Breast epithelium (tissue), 4 donors: ENCODE measurements at regions of chr14 and their contacts with region 1.

Region 1: GRCh38 chr14:52950898-52951689 is at the start of gene FERMT2:
- DNase-seq: peak; percentile 80 to 83
- H3K4me3 ChIP-seq: peak within 1 kb of the TSS; percentile 80 to 93 (median 83)
- H3K27ac ChIP-seq: peak within 1 kb of the TSS; percentile 96 to 98
- H3K4me1 ChIP-seq: peaks cover 0 to 4% of the 10 kb centered on the region in 2 donors
- H3K27me3 ChIP-seq: no peaks in the 10 kb centered on the region
- CTCF ChIP-seq: no peak
- POLR2A ChIP-seq: peak; percentile 47
- total RNA-seq, gene FERMT2: 87.8 to 203 (median 90.2) TPM

Region 2: GRCh38 chr14:52835122-52835903 is 115.8 kb before region 1 on chr14:
- intact Hi-C with region 1: loop called (anchors 10 kb)
- DNase-seq: no peak
- H3K4me3 ChIP-seq: no peak overlapping the region
- H3K27ac ChIP-seq: no peak overlapping the region
- H3K4me1 ChIP-seq: no peaks in the 10 kb centered on the region
- H3K27me3 ChIP-seq: no peaks in the 10 kb centered on the region
- CTCF ChIP-seq: no peak
- POLR2A ChIP-seq: no peak